ENCODE measurements at regions of chr22 and their contacts with region 1.

Region 1: DNA sequence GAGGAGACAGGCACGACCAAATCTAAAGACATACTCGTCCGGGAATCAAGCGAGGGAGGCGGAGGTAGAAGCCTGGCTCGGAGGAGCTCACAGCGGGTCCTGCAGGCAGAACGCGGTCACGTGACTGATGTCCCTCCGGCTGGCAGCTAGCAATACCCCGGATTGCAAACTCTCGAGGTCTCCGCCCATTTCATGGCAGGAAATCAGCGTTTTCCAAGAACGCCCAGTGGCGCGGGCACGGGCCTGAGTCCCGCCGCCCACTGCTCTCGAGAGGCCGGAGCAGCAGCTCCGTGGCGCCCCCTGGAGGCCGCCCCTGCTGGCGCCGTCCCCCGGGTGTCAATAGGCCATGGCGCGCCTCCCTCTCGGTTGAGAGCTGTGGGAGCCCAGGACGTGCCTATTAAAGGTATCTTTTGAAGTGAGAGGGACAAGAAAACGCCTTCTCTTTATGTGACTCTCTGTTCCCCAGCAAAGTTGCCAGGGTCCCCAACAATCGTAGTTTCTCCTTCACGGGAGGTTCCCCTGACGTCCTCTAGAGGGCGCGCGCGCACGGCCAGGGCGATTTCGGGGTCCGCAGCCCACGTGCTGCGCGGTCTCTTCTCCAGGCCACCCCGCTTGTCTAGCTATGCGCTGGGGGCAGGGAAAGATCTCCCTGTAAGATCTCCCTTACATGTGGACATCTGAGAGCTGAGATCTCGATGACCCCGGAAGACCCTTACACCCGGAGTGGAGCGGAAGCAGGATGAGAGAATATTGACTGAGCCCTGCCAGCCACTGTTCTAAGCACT is 37.3 kb upstream of the RBFOX2 start:
- DNase-seq: peak; percentile 89 to 92
- ATAC-seq: peak; percentile 94 to 96
- H3K4me3 ChIP-seq: peak overlapping the region; percentile 44
- H3K27ac ChIP-seq: peak overlapping the region; percentile 88 to 92
- H3K4me1 ChIP-seq: peaks cover 5% of the 10 kb centered on the region; the same call in 2 of the 3 replicates
- CTCF ChIP-seq: peak; percentile 100
- EP300 ChIP-seq: no peak
- POLR2A ChIP-seq: peak; percentile 62
- RAD21 ChIP-seq: peak; percentile 45 to 86

Region 2: GRCh38 chr22:35627264-35628041 is 438.5 kb before region 1 on chr22:
- CTCF ChIA-PET with region 1: interaction called, 17 read pairs
- POLR2A ChIA-PET with region 1: interaction called, 5 read pairs
- DNase-seq: peak; percentile 66 to 94
- ATAC-seq: peak; percentile 77 to 84
- H3K4me3 ChIP-seq: peak overlapping the region; percentile 44
- H3K27ac ChIP-seq: peak overlapping the region; percentile 89 to 99
- H3K4me1 ChIP-seq: peaks cover 46% of the 10 kb centered on the region
- CTCF ChIP-seq: peak; percentile 68
- EP300 ChIP-seq: no peak
- POLR2A ChIP-seq: no peak; the same call in none of the 2 replicates
- RAD21 ChIP-seq: peak; percentile 92 to 93

Region 3: GRCh38 chr22:35940166-35940565 is 125.8 kb before region 1 on chr22:
- CTCF ChIA-PET with region 1: interaction called, 85 read pairs
- POLR2A ChIA-PET with region 1: no interaction called
- DNase-seq: no peak
- ATAC-seq: no peak
- H3K4me3 ChIP-seq: no peak overlapping the region
- H3K27ac ChIP-seq: no peak overlapping the region
- H3K4me1 ChIP-seq: no peaks in the 10 kb centered on the region
- CTCF ChIP-seq: no peak
- EP300 ChIP-seq: no peak
- POLR2A ChIP-seq: no peak
- RAD21 ChIP-seq: no peak

Region 4: DNA sequence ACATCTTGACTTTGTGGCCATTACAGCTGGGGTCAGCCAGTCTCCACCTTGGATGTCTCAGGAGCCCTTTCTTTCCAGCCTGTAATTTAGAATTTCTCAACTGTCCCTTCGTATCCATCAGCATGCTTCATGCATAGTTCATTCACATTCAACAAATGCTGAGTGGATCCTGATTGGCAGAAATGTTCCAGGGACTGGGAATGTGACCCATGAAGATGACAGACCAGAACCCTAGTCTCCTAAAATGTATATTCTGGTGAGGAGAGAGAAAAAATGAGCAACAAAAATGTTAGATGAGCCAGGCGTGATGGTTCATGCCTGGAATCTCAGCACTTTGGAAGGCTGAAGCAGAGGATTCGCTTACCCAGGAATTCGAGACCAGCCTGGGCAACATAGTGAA is 19.8 kb before region 1 on chr22:
- CTCF ChIA-PET with region 1: interaction called, 46 read pairs
- POLR2A ChIA-PET with region 1: no interaction called
- DNase-seq: no peak
- ATAC-seq: no peak
- H3K4me3 ChIP-seq: no peak overlapping the region
- H3K27ac ChIP-seq: no peak overlapping the region
- H3K4me1 ChIP-seq: no peaks in the 10 kb centered on the region
- CTCF ChIP-seq: no peak
- EP300 ChIP-seq: no peak
- POLR2A ChIP-seq: no peak
- RAD21 ChIP-seq: no peak

Region 5: GRCh38 chr22:36088292-36088691 is 22.3 kb after region 1 on chr22:
- CTCF ChIA-PET with region 1: interaction called, 66 read pairs
- POLR2A ChIA-PET with region 1: no interaction called
- DNase-seq: no peak
- ATAC-seq: no peak
- H3K4me3 ChIP-seq: no peak overlapping the region
- H3K27ac ChIP-seq: no peak overlapping the region
- H3K4me1 ChIP-seq: no peaks in the 10 kb centered on the region
- CTCF ChIP-seq: no peak
- EP300 ChIP-seq: no peak
- POLR2A ChIP-seq: no peak
- RAD21 ChIP-seq: no peak

Region 6: DNA sequence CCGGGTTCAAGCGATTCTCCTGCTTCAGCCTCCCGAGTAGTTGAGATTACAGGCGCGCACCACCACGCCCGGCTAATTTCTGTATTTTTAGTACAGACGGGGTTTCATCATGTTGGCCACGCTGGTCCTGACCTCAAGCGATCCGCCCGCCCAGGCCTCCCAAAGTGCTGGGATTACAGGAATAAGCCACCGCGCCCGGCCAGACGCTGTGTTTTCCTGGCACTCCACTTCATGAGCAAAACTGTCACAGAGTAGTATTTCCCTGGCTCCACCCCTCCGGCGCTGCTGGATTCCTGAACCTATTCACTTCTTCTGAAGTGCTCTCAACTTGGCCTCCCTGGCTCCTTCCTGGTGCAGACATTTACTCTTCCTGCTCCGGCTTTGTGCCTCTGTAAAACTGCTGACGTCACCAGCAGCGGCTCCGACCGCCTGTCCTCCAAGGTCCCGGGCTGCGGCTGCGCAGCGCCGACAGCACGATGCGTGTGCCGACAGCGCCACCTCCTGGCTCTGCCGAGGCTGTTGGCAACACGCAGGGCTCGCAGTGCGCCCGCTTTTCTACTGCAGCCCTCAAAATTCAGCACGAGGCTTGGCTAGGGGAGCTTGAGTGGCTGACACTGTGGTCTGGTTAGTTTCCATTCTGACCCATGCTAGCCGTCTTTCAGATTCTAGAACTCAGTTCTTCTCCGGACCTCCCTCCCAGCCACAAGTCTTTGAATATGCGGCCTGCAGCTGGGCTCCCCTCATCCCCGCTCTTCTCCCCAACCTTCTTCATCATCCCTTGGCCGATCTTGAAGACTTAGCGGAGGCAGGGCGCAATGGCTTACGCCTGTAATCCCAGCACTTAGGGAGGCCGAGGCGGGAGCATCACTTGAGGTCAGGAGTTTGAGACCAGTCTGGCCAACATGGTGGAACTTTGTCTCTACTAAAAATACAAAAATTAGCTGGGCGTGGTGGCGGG is 58.0 kb after region 1 on chr22:
- CTCF ChIA-PET with region 1: interaction called, 20 read pairs
- POLR2A ChIA-PET with region 1: interaction called, 3 read pairs
- DNase-seq: peak; percentile 62 to 93
- ATAC-seq: peak; percentile 97 to 99
- H3K4me3 ChIP-seq: no peak overlapping the region
- H3K27ac ChIP-seq: peak overlapping the region; percentile 77 to 90
- H3K4me1 ChIP-seq: peaks cover 6% of the 10 kb centered on the region
- CTCF ChIP-seq: peak; percentile 87
- EP300 ChIP-seq: no peak
- POLR2A ChIP-seq: peak; percentile 30; the same call in 1 of the 2 replicates
- RAD21 ChIP-seq: peak; percentile 93 to 98

Region 7: DNA sequence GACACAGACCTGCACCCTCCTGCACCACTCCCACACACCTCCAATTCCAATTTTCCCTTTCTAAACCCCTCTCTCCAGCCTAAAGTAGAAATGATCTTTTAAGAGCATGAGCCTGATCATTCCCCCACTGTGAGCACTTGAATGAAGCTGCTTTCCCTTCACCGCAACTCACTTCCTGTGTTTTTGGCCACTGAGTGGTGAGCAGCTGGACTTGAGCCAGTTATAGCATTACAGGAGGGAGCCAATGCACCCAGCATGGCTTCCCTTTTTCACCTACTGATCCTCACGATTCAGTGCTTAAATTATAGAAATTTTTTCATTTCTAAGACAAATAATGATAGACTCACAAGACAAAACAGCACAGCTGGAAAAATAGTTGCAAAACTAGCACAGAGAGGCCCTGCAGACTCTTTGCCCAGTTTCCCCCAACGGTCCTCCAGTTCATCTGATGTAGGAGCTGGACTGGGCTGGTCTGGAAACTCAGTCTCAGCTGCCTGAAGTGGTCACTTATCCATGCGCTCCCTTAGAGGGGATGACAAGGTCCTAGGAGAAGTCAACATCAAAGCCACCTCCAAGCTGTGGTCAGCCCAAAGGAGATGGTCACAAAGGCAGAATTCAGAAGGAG is 145.4 kb after region 1 on chr22:
- CTCF ChIA-PET with region 1: no interaction called
- POLR2A ChIA-PET with region 1: no interaction called
- DNase-seq: no peak
- ATAC-seq: no peak
- H3K4me3 ChIP-seq: no peak overlapping the region
- H3K27ac ChIP-seq: no peak overlapping the region
- H3K4me1 ChIP-seq: no peaks in the 10 kb centered on the region
- CTCF ChIP-seq: no peak
- EP300 ChIP-seq: no peak
- POLR2A ChIP-seq: no peak
- RAD21 ChIP-seq: no peak